ENCODE measurements at regions of chr6 and their contacts with region 1.

Region 1: GRCh38 chr6:36752886-36753506 is 55.4 kb downstream of the RAB44 start:
- DNase-seq: peak; percentile 82
- ATAC-seq: peak; percentile 67
- H3K4me3 ChIP-seq: 0 out of 2 replicates have a peak overlapping the region, but pooled peaks have one; percentile 7
- H3K27ac ChIP-seq: peak overlapping the region; percentile 80
- H3K4me1 ChIP-seq: peaks cover 56% of the 10 kb centered on the region
- H3K27me3 ChIP-seq: no peaks in the 10 kb centered on the region
- CTCF ChIP-seq: no peak
- EP300 ChIP-seq: peak; percentile 54 to 62; a peak in 3 of 4 replicates
- POLR2A ChIP-seq: no peak
- RAD21 ChIP-seq: no peak

Region 2: DNA sequence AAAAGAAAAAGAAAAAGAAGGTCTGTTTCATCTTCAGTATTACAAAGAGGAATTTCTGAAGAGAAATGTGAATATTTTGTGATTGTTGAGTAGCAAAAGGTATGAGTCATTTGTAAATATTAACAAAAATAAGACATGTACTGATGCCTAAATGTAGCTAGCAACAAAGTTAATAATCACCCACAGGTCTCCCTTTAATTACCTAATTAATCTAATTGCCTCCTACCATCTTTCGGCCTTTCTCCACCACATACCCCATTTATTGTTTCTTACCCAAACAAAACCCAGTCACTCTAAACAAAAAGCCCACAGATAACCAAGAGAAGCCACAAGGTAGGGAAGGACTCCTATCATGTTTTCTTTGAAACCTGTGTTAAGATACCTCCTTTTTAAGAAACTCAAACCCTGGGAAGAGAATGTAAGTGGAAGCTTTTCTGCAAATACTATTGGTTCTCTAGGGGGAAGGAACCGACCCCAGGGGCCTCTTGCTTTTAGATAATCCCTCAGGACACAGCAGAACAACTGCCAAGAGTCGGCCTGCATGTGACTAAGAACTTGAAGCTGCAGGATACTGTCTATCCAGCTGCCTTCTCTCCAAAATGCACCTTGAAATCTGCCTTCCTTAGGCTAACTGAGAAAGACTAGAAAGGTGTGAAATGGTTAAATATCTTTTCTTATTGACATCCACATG is 189.6 kb before region 1 on chr6:
- CTCF ChIA-PET with region 1: no interaction called
- POLR2A ChIA-PET with region 1: no interaction called
- RAD21 ChIA-PET with region 1: no interaction called
- SMC1A ChIA-PET with region 1: no interaction called
- in situ Hi-C with region 1: no loop called
- intact Hi-C with region 1: no loop called
- DNase-seq: no peak
- ATAC-seq: no peak
- H3K4me3 ChIP-seq: no peak overlapping the region
- H3K27ac ChIP-seq: no peak overlapping the region
- H3K4me1 ChIP-seq: no peaks in the 10 kb centered on the region
- H3K27me3 ChIP-seq: no peaks in the 10 kb centered on the region
- CTCF ChIP-seq: no peak
- EP300 ChIP-seq: no peak
- POLR2A ChIP-seq: no peak
- RAD21 ChIP-seq: no peak

Region 3: DNA sequence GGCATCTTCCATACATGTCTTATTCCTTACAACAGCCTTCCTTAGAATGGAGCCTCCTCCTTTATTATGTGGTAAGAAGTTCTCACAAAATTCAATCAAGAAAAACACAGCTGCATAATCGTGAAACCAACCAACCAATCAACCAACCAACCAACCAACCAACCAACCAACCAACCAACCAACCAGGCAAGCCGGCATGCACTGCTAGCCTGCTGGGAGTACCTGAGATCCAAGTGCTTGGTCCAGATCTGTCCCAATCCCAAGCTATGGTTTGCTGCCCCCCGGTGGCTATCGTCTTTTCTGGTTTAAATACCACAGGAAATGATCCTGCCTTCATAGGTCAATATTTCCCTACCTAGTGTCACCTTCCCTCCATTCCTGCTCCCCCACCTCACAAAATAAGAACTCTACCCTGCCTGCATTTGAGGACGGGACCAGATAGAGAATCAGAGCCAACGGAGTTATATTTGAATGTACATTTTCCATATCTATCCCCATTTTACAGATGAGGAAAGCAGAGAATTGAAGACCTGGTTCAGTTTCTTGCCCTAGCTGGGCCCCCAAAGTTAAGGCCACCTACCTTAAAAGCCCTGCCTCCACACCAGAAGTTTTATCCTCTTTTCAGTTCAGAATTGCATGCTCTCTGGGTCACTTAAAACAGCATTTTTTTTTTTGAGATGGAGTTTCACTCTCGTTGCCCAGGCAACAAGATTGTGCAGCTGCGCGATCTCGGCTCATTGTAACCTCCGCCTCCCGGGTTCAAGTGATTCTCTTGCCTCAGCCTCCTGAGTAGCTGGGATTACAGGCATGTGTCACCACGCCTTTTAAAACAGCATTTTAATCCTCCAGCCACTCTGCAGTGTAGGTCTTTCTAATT is 28.2 kb before region 1 on chr6:
- CTCF ChIA-PET with region 1: interaction called, 61 read pairs
- POLR2A ChIA-PET with region 1: interaction called, 12 read pairs
- RAD21 ChIA-PET with region 1: interaction called, 22 read pairs
- SMC1A ChIA-PET with region 1: interaction called, 9 read pairs
- in situ Hi-C with region 1: no loop called
- intact Hi-C with region 1: loop called (anchors 1 kb)
- DNase-seq: no peak
- ATAC-seq: peak; percentile 34
- H3K4me3 ChIP-seq: no peak overlapping the region
- H3K27ac ChIP-seq: 0 out of 2 replicates have a peak overlapping the region, but pooled peaks have one; percentile 9
- H3K4me1 ChIP-seq: peaks cover 36% of the 10 kb centered on the region
- H3K27me3 ChIP-seq: no peaks in the 10 kb centered on the region
- CTCF ChIP-seq: peak; percentile 43 to 69 (median 51)
- EP300 ChIP-seq: no peak
- POLR2A ChIP-seq: no peak
- RAD21 ChIP-seq: peak; percentile 69

Measured in GM12878 (cell line).